ENCODE measurements at regions of chr2 and their contacts with region 1.

Region 1: DNA sequence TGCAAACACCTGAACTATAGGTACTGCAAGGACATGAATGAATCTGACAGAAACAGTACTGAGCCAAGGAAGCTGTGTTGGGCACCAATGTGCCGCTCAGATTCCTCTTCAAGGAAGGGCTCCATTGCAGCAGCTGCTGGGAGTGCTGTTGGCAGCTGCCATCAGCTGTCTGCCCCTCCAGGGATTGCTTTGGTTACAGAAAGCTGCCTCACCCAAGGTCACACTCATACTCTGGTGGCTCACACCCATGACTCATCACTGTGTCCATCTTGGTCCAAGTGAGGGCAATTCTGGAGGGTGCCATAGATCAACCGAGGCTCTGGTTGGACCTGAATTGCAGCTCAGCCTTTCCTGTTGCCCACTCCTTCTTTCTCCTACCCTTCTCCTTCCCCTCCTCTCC is 24.4 kb upstream of the TRPM8 start:
- DNase-seq: peak; percentile 26
- ATAC-seq: peak; percentile 51; the same call in 1 of the 2 replicates
- H3K4me3 ChIP-seq: no peak overlapping the region
- H3K27ac ChIP-seq: no peak overlapping the region
- H3K4me1 ChIP-seq: no peaks in the 10 kb centered on the region
- H3K27me3 ChIP-seq: no peaks in the 10 kb centered on the region
- CTCF ChIP-seq: no peak

Region 2: GRCh38 chr2:233862261-233862769 is 30.5 kb before region 1 on chr2:
- CTCF ChIA-PET with region 1: no interaction called
- POLR2A ChIA-PET with region 1: no interaction called
- intact Hi-C with region 1: loop called (anchors 5 kb)
- DNase-seq: no peak
- ATAC-seq: no peak
- H3K4me3 ChIP-seq: no peak overlapping the region
- H3K27ac ChIP-seq: no peak overlapping the region
- H3K4me1 ChIP-seq: 0 out of 2 replicates have a peak, but pooled peaks cover 9% of the 10 kb centered on the region
- H3K27me3 ChIP-seq: no peaks in the 10 kb centered on the region
- CTCF ChIP-seq: no peak